ENCODE measurements at regions of chr3 and their contacts with region 1.

Region 1: GRCh38 chr3:150348500-150348899 is 59.6 kb upstream of the TSC22D2 start:
- DNase-seq: no peak

Region 2: GRCh38 chr3:150079029-150079739 is 269.3 kb before region 1 on chr3:
- intact Hi-C with region 1: no loop called
- DNase-seq: no peak

Region 3: GRCh38 chr3:150232992-150233451 is 115.5 kb before region 1 on chr3:
- intact Hi-C with region 1: loop called (anchors 1 kb)
- DNase-seq: peak; percentile 90

Region 4: GRCh38 chr3:150253622-150254021 is 94.9 kb before region 1 on chr3:
- intact Hi-C with region 1: loop called (anchors 2 kb)
- DNase-seq: no peak

Region 5: GRCh38 chr3:150371741-150372254 is 23.3 kb after region 1 on chr3:
- intact Hi-C with region 1: loop called (anchors 2 kb)
- DNase-seq: no peak

Measured in cardiac septum (tissue), 1 donor.